ENCODE measurements at regions of chr19 and their contacts with region 1.

Region 1: GRCh38 chr19:9785367-9786331 is 17.1 kb upstream of the ZNF846 start:
- DNase-seq: peak; percentile 93
- H3K4me3 ChIP-seq: peak overlapping the region; percentile 66 to 74 (median 71)
- H3K27ac ChIP-seq: peak overlapping the region; percentile 73
- H3K4me1 ChIP-seq: no peaks in the 10 kb centered on the region
- H3K27me3 ChIP-seq: no peaks in the 10 kb centered on the region
- CTCF ChIP-seq: no peak

Region 2: DNA sequence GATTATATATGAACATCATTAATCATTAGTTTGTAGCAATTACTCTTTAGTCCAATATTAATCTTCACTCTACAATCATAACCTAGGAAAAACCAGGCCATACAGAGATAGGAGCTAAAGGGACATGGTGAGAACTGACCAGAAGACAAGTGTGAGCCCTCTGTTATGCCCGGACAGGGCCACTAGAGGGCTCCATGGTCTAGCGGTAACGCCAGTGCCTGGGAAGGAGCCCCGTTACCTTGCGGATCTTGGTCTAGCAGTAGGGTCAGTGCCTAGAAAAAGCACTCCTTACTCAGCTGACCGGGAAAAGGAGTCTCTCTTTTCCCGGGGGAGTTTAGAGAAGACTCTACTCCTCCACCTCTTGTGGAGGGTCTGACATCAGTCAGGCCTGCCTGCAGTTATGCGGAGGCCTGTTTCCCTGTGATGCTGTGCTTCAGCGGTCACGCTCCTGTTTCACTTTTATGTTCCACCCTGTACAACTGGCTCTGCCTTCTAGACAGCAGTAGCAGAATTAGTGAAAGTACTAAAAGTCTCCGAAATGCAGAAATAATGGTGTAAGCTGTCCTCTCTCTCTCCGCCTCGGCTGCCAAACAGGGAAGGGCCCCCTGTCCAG is 580.0 kb before region 1 on chr19:
- CTCF ChIA-PET with region 1: no interaction called
- dilution Hi-C with region 1: no loop called
- in situ Hi-C with region 1: loop called in 1 of 2 experiments (anchors 10 kb)
- intact Hi-C with region 1: no loop called
- DNase-seq: peak; percentile 53
- H3K4me3 ChIP-seq: peak overlapping the region; percentile 21 to 33 (median 27)
- H3K27ac ChIP-seq: no peak overlapping the region
- H3K4me1 ChIP-seq: no peaks in the 10 kb centered on the region
- H3K27me3 ChIP-seq: no peaks in the 10 kb centered on the region
- CTCF ChIP-seq: peak; percentile 71 to 89

Region 3: DNA sequence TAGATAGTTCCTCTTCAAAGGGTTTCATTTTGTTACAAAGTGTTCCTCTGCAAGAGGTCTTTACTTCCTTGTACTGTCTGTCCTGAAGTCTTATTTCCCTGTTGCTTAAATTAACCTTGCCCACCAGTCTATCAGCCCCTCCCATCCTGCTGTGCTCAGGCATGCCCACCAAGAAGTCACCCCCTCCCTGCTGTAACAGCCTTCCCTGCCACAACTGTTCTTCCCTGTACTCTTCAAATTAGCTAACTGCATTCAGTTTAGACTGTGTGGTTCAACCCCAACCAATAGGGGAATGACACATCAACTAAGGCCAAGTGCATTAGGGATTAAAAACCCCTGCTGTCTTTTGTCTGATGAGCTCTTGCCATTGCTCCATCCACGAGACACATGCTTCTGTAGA is 76.3 kb before region 1 on chr19:
- CTCF ChIA-PET with region 1: no interaction called
- dilution Hi-C with region 1: no loop called
- in situ Hi-C with region 1: no loop called
- intact Hi-C with region 1: no loop called
- DNase-seq: no peak
- H3K4me3 ChIP-seq: no peak overlapping the region
- H3K27ac ChIP-seq: no peak overlapping the region
- H3K4me1 ChIP-seq: no peaks in the 10 kb centered on the region
- H3K27me3 ChIP-seq: no peaks in the 10 kb centered on the region
- CTCF ChIP-seq: no peak

Region 4: GRCh38 chr19:9768175-9769112 is 17.2 kb before region 1 on chr19 and contains the start of gene ZNF846:
- CTCF ChIA-PET with region 1: interaction called, 3 read pairs
- dilution Hi-C with region 1: no loop called
- in situ Hi-C with region 1: no loop called
- intact Hi-C with region 1: loop called (anchors 2 kb)
- DNase-seq: peak; percentile 95
- H3K4me3 ChIP-seq: peak within 1 kb of the TSS; percentile 65 to 87 (median 80)
- H3K27ac ChIP-seq: peak within 1 kb of the TSS; percentile 84
- H3K4me1 ChIP-seq: peaks cover 3% of the 10 kb centered on the region
- H3K27me3 ChIP-seq: no peaks in the 10 kb centered on the region
- CTCF ChIP-seq: no peak
- total RNA-seq, gene ZNF846: 10.1 to 13.0 TPM

Region 5: DNA sequence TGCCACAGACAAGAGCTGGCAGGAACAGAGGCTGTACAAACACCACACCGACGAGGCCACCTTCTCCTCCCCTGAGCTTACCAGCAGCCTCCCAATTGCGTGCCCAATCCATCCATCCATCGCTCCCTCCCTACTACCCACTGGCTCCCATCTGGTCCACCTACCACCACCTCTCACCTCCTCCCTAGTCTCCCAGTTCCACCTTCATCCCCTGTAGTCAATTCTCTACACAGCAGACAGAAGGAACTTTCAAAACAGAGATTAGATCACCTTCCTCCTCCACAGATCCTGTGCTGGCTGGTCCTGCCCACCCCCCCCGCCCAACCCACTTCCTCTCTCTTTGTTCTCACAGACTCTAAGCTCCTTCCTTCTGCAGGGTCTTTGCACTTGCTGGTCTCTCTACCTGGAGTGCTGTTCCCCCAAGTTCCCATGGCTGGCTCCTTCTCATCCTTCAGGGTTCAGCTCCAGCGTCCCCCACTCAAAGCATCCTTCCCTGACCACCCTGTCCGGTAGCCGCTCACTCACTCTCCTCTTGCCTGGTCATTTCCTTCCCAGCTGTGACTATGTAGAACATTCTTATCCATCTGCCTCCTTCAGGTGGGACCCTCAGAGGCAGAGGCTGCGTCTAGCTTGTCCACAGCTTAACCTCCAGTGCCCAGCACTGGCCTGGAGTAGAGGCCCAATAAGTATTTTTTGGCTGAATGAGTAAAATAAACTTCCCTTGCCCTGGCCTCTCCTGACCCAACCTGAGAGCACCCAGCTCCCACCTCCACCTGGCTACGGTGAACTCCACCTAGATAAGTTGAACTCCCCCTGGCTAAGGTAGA is 72.5 kb after region 1 on chr19:
- CTCF ChIA-PET with region 1: no interaction called
- dilution Hi-C with region 1: no loop called
- in situ Hi-C with region 1: no loop called
- intact Hi-C with region 1: no loop called
- DNase-seq: peak; percentile 13
- H3K4me3 ChIP-seq: no peak overlapping the region
- H3K27ac ChIP-seq: no peak overlapping the region
- H3K4me1 ChIP-seq: no peaks in the 10 kb centered on the region
- H3K27me3 ChIP-seq: peaks cover 1% of the 10 kb centered on the region
- CTCF ChIP-seq: no peak

Measured in mammary epithelial cell (primary cell).